ENCODE measurements at regions of chr2 and their contacts with region 1.

Region 1: DNA sequence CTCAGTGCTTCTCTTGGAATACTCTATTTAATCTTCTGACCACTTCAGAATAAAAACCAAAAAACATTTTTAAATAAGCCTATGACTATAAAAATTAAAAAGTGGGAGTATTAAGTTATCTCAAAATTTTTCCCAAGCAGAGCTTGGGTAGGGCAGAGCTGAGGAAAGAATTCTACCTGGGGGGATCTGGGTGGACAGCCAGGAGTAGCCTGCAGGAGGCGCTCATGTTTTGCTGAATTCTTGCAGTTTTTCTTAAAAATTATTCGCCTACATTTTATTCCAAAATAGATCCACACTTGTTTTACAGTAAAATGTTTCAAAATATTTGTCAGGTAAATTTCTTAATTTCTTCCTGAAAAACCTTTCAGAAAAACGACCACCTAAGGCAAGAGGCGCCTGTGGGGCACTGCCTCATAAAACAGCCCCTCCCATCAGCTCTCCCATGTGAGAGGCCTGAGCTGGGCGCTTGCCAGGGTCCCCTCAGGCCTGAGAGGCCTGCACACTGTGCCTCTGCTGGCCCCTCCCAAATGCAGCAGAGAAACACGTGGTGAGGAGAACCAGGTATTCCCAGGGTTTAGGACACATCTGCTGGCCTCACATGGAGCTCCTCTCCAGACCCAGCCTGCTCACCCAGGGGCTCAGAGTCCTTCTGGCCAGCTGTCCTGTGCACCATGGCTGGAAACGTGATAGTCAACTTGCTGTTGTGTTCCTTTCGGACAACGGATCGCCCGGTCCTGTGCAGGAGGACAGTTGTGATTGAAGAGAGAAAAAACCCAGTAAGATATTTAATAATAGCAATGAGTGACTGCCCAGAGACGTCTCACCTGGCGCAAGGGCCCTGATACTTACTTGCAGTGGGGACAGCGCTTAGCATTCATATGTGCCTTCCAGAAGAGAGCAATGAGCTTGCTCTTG is 17.5 kb downstream of the POLR1A start:
- DNase-seq: no peak
- ATAC-seq: no peak
- H3K4me3 ChIP-seq: no peak overlapping the region
- H3K27ac ChIP-seq: no peak overlapping the region
- H3K4me1 ChIP-seq: no peaks in the 10 kb centered on the region
- H3K27me3 ChIP-seq: no peaks in the 10 kb centered on the region
- CTCF ChIP-seq: peak; percentile 73

Region 2: DNA sequence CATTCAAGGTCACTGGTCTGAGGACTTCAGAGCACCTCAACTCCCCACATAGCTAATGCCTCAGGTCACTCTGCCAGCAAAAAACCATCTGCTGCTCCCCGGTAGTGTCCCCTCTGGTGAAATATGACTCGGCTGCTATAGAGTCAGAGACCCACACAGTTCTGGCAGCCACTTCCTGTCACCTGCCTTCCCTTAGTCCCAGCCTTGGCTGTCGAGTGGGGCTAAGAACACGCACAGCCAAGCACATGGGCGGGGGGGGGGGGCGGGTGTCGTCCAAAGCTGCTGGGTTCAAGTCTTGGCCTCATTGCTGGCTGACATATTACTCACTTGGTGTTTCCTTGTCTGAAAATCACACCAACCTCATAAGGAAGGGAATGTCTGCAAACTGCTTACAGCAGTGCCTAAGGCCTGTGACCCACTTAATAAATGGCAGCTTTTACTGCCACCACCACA is 20.0 kb before region 1 on chr2:
- CTCF ChIA-PET with region 1: no interaction called
- POLR2A ChIA-PET with region 1: no interaction called
- in situ Hi-C with region 1: no loop called
- intact Hi-C with region 1: no loop called
- DNase-seq: no peak
- ATAC-seq: 0 out of 2 replicates have a peak, but pooled peaks have one; percentile 49
- H3K4me3 ChIP-seq: no peak overlapping the region
- H3K27ac ChIP-seq: no peak overlapping the region
- H3K4me1 ChIP-seq: no peaks in the 10 kb centered on the region
- H3K27me3 ChIP-seq: no peaks in the 10 kb centered on the region
- CTCF ChIP-seq: no peak

Region 3: DNA sequence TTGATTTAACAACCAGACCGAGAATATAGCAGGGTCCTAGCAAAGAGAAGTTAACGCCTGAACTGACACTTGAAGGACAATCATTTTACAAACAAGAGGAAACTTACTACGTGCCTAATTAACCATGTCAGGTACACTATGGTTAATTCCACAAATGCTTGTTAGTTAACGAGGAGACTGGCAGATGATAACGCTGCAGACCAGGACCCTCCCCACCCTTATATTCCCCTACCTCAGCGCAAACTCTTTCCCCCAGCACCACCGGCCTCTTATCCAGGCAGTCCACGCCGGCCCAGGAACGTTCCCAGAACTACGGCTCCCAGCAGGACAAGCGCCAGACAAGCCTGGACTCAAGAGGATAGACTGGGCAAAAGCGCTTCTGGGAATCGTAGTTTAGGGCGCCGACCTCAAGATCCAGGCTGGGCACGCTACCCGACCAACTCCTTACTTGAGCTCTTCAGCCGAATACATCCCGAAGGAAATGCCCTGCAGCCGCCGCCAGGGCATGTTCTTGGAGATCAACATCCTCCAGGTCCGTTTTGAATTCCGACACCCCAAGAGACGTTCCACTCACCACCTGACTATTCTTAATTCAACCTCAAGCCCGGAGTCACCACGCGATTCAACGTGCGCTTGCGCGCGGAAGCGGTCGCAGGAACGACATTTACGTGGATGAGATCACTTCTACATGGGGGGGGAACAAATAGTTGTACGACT is 17.2 kb after region 1 on chr2 and contains the start of gene POLR1A:
- CTCF ChIA-PET with region 1: interaction called, 13 read pairs
- POLR2A ChIA-PET with region 1: interaction called, 10 read pairs
- in situ Hi-C with region 1: no loop called
- intact Hi-C with region 1: no loop called
- DNase-seq: peak; percentile 94
- ATAC-seq: peak; percentile 96
- H3K4me3 ChIP-seq: peak within 1 kb of the TSS; percentile 96 to 99
- H3K27ac ChIP-seq: peak within 1 kb of the TSS; percentile 99
- H3K4me1 ChIP-seq: peaks cover 21% of the 10 kb centered on the region
- H3K27me3 ChIP-seq: no peaks in the 10 kb centered on the region
- CTCF ChIP-seq: no peak
- total RNA-seq, gene POLR1A: 62.6 TPM